IMR-90 (cell line): ENCODE measurements at regions of chr12 and their contacts with region 1.

Region 1: GRCh38 chr12:124567661-124568373 is 405 bp upstream of the NCOR2 start:
- DNase-seq: peak; percentile 94
- ATAC-seq: peak; percentile 83
- H3K4me3 ChIP-seq: peak overlapping the region; percentile 0
- H3K27ac ChIP-seq: peak overlapping the region; percentile 89
- H3K4me1 ChIP-seq: peaks cover 23% of the 10 kb centered on the region
- H3K27me3 ChIP-seq: no peaks in the 10 kb centered on the region
- CTCF ChIP-seq: peak; percentile 22; the same call in 1 of the 2 replicates
- POLR2A ChIP-seq: no peak
- RAD21 ChIP-seq: peak; percentile 3; the same call in 1 of the 2 replicates

Region 2: GRCh38 chr12:124422570-124423523 is 145.0 kb before region 1 on chr12:
- CTCF ChIA-PET with region 1: no interaction called
- POLR2A ChIA-PET with region 1: no interaction called
- dilution Hi-C with region 1: no loop called
- in situ Hi-C with region 1: no loop called
- intact Hi-C with region 1: loop called (anchors 5 kb)
- DNase-seq: peak; percentile 94
- ATAC-seq: peak; percentile 82
- H3K4me3 ChIP-seq: peak overlapping the region; percentile 10; the same call in 1 of the 2 replicates
- H3K27ac ChIP-seq: peak overlapping the region; percentile 87
- H3K4me1 ChIP-seq: peaks cover 32% of the 10 kb centered on the region
- H3K27me3 ChIP-seq: no peaks in the 10 kb centered on the region
- CTCF ChIP-seq: no peak
- POLR2A ChIP-seq: peak; percentile 52
- RAD21 ChIP-seq: peak; percentile 22

Region 3: GRCh38 chr12:124655698-124656516 is 88.1 kb after region 1 on chr12:
- CTCF ChIA-PET with region 1: no interaction called
- POLR2A ChIA-PET with region 1: no interaction called
- dilution Hi-C with region 1: no loop called
- in situ Hi-C with region 1: no loop called
- intact Hi-C with region 1: loop called (anchors 5 kb)
- DNase-seq: peak; percentile 93
- ATAC-seq: peak; percentile 87
- H3K4me3 ChIP-seq: no peak overlapping the region
- H3K27ac ChIP-seq: peak overlapping the region; percentile 95
- H3K4me1 ChIP-seq: peaks cover 25% of the 10 kb centered on the region
- H3K27me3 ChIP-seq: no peaks in the 10 kb centered on the region
- CTCF ChIP-seq: 0 out of 2 replicates have a peak, but pooled peaks have one; percentile 21
- POLR2A ChIP-seq: 0 out of 2 replicates have a peak, but pooled peaks have one; percentile 24
- RAD21 ChIP-seq: peak; percentile 38; the same call in 1 of the 2 replicates

Region 4: GRCh38 chr12:124709722-124710677 is 142.2 kb after region 1 on chr12:
- CTCF ChIA-PET with region 1: interaction called, 4 read pairs
- POLR2A ChIA-PET with region 1: interaction called, 4 read pairs
- dilution Hi-C with region 1: no loop called
- in situ Hi-C with region 1: no loop called
- intact Hi-C with region 1: loop called (anchors 2 kb)
- DNase-seq: peak; percentile 87
- ATAC-seq: peak; percentile 90
- H3K4me3 ChIP-seq: no peak overlapping the region
- H3K27ac ChIP-seq: peak overlapping the region; percentile 19; the same call in 1 of the 2 replicates
- H3K4me1 ChIP-seq: peaks cover 10% of the 10 kb centered on the region
- H3K27me3 ChIP-seq: no peaks in the 10 kb centered on the region
- CTCF ChIP-seq: peak; percentile 64
- POLR2A ChIP-seq: no peak
- RAD21 ChIP-seq: peak; percentile 55